H1 (cell line): ENCODE measurements at regions of chr14 and their contacts with region 1.

Region 1: GRCh38 chr14:24093901-24094761 is at the start of gene PCK2:
- DNase-seq: peak; percentile 93 to 95
- H3K4me3 ChIP-seq: peak within 1 kb of the TSS; percentile 60 to 96 (median 84)
- H3K27ac ChIP-seq: peak within 1 kb of the TSS; percentile 89
- H3K4me1 ChIP-seq: peaks cover 5 to 13% (median 9%) of the 10 kb centered on the region in 4 experiments
- H3K27me3 ChIP-seq: no peaks in the 10 kb centered on the region
- CTCF ChIP-seq: no peak
- EP300 ChIP-seq: peak in 1 of 2 experiments; percentile 80; a peak in 1 of 3 replicates
- POLR2A ChIP-seq: peak; percentile 87 to 97
- RAD21 ChIP-seq: no peak
- total RNA-seq, gene PCK2: 79.3 and 81.9 TPM in 2 replicates

Region 2: GRCh38 chr14:23922545-23922944 is 171.6 kb before region 1 on chr14:
- CTCF ChIA-PET with region 1: no interaction called
- POLR2A ChIA-PET with region 1: no interaction called
- DNase-seq: no peak
- H3K4me3 ChIP-seq: no peak overlapping the region
- H3K27ac ChIP-seq: no peak overlapping the region
- H3K4me1 ChIP-seq: no peaks in the 10 kb centered on the region
- H3K27me3 ChIP-seq: no peaks in the 10 kb centered on the region
- CTCF ChIP-seq: no peak
- EP300 ChIP-seq: no peak
- POLR2A ChIP-seq: no peak
- RAD21 ChIP-seq: no peak

Region 3: DNA sequence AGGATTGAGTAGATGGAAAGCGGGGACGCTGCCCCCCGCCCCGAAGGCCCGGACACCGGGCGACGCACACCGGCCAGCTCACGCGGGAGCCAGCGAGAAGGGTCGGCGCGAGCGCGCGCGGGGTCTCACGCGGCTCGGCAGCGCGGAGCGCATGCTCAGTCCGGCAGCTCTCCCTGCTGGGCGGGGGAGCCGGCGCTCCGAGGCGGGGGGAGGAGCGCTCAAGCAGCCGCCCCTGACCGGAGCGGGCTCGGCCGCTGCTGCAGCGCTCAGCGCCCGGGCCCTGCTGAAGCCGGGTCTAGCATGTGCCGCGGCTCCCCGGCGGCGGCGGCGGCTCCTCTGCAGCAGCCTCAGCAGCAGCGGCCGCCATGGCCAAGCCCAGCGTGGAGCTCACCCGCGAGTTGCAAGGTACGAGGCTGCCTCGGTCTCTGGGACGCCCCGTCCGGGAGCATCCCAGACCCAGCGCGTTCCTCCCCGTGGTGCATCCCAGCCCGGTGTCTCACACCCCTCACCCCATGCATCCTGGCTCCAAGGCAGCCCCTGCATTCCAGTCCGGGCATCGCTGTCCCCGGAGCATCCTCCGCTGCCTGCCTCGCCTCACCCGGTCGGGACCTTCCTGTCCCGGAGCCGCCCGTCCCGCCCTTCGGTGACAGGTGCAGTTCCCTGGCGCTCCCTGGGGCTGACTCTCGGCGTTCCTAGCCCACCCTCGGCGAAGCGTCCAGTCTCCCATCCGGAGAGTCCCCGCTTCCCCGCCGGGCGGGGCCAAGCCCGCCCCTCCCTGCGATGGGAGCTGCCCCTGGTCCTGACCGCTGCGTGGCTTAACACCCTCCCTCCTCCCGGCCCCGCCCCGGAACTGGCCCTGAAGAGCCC is 42.1 kb before region 1 on chr14 and contains the start of gene CARMIL3:
- CTCF ChIA-PET with region 1: interaction called, 234 read pairs
- POLR2A ChIA-PET with region 1: interaction called, 97 read pairs
- DNase-seq: peak in 1 of 2 experiments; percentile 89
- H3K4me3 ChIP-seq: peak within 1 kb of the TSS; percentile 56 to 82 (median 80)
- H3K27ac ChIP-seq: no peak within 1 kb of the TSS
- H3K4me1 ChIP-seq: peaks cover 0 to 10% (median 5%) of the 10 kb centered on the region in 4 experiments; a peak in 5 of 7 replicates
- H3K27me3 ChIP-seq: no peaks in the 10 kb centered on the region; a peak in 1 of 7 replicates
- CTCF ChIP-seq: no peak
- EP300 ChIP-seq: peak in 1 of 2 experiments; percentile 25; a peak in 1 of 3 replicates
- POLR2A ChIP-seq: no peak; a peak in 2 of 3 replicates
- RAD21 ChIP-seq: no peak
- total RNA-seq, gene CARMIL3: 8.5 and 9.0 TPM in 2 replicates

Region 4: GRCh38 chr14:24080888-24081738 is 13.0 kb before region 1 on chr14:
- CTCF ChIA-PET with region 1: interaction called, 316 read pairs
- POLR2A ChIA-PET with region 1: interaction called, 626 read pairs
- DNase-seq: peak in 1 of 2 experiments; percentile 81
- H3K4me3 ChIP-seq: peak overlapping the region; percentile 54 to 67 (median 66)
- H3K27ac ChIP-seq: no peak overlapping the region
- H3K4me1 ChIP-seq: peaks cover 0 to 18% (median 12%) of the 10 kb centered on the region in 4 experiments; a peak in 6 of 7 replicates
- H3K27me3 ChIP-seq: peaks cover 0 to 10% (median 7%) of the 10 kb centered on the region in 4 experiments; a peak in 5 of 7 replicates
- CTCF ChIP-seq: no peak
- EP300 ChIP-seq: no peak
- POLR2A ChIP-seq: peak in 1 of 2 experiments; percentile 50; a peak in 1 of 3 replicates
- RAD21 ChIP-seq: no peak

Region 5: GRCh38 chr14:24114536-24115450 is 20.7 kb after region 1 on chr14 and contains the starts of genes DCAF11 and NRL:
- CTCF ChIA-PET with region 1: interaction called, 160 read pairs
- POLR2A ChIA-PET with region 1: interaction called, 259 read pairs
- DNase-seq: peak; percentile 96 to 99
- H3K4me3 ChIP-seq: peak within 1 kb of the TSS; percentile 68 to 89 (median 76)
- H3K27ac ChIP-seq: peak within 1 kb of the TSS; percentile 97
- H3K4me1 ChIP-seq: peaks cover 0 to 4% (median 2%) of the 10 kb centered on the region in 4 experiments; a peak in 5 of 7 replicates
- H3K27me3 ChIP-seq: no peaks in the 10 kb centered on the region
- CTCF ChIP-seq: no peak
- EP300 ChIP-seq: no peak
- POLR2A ChIP-seq: peak; percentile 45 to 75
- RAD21 ChIP-seq: no peak
- total RNA-seq, gene DCAF11: 63.6 and 67.2 TPM in 2 replicates
- total RNA-seq, gene NRL: 1.1 TPM in 2 replicates

Region 6: GRCh38 chr14:24135834-24136542 is 41.9 kb after region 1 on chr14 and contains the start of gene PSME1:
- CTCF ChIA-PET with region 1: interaction called, 3 read pairs
- POLR2A ChIA-PET with region 1: interaction called, 18 read pairs
- DNase-seq: peak in 1 of 2 experiments; percentile 94
- H3K4me3 ChIP-seq: peak within 1 kb of the TSS; percentile 79 to 100 (median 84)
- H3K27ac ChIP-seq: peak within 1 kb of the TSS; percentile 14; the same call in 1 of the 2 replicates
- H3K4me1 ChIP-seq: peaks cover 0 to 10% (median 6%) of the 10 kb centered on the region in 4 experiments; a peak in 5 of 7 replicates
- H3K27me3 ChIP-seq: no peaks in the 10 kb centered on the region
- CTCF ChIP-seq: no peak
- EP300 ChIP-seq: no peak
- POLR2A ChIP-seq: peak; percentile 37 to 38; a peak in 1 of 3 replicates
- RAD21 ChIP-seq: no peak
- total RNA-seq, gene PSME1: 85.9 and 91.7 TPM in 2 replicates

Region 7: GRCh38 chr14:24146978-24147760 is 53.0 kb after region 1 on chr14 and contains the start of gene RNF31:
- CTCF ChIA-PET with region 1: interaction called, 6 read pairs
- POLR2A ChIA-PET with region 1: interaction called, 29 read pairs
- DNase-seq: peak; percentile 93 to 96
- H3K4me3 ChIP-seq: peak within 1 kb of the TSS; percentile 92 to 98 (median 96)
- H3K27ac ChIP-seq: peak within 1 kb of the TSS; percentile 45; the same call in 1 of the 2 replicates
- H3K4me1 ChIP-seq: peaks cover 0 to 10% (median 7%) of the 10 kb centered on the region in 4 experiments; a peak in 5 of 7 replicates
- H3K27me3 ChIP-seq: no peaks in the 10 kb centered on the region
- CTCF ChIP-seq: no peak
- EP300 ChIP-seq: no peak
- POLR2A ChIP-seq: peak in 1 of 2 experiments; percentile 55; a peak in 1 of 3 replicates
- RAD21 ChIP-seq: no peak
- total RNA-seq, gene RNF31: 57.8 and 72.0 TPM in 2 replicates

Region 8: DNA sequence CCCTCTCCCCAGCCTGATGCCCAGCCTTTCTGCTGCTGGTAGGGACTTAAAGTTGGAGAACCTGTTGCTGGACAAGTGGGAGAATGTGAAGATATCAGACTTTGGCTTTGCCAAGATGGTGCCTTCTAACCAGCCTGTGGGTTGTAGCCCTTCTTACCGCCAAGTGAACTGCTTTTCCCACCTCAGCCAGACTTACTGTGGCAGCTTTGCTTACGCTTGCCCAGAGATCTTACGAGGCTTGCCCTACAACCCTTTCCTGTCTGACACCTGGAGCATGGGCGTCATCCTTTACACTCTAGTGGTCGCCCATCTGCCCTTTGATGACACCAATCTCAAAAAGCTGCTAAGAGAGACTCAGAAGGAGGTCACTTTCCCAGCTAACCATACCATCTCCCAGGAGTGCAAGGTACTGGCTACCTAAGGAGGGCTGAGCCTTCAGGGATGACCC is 113.0 kb after region 1 on chr14:
- CTCF ChIA-PET with region 1: no interaction called
- POLR2A ChIA-PET with region 1: no interaction called
- DNase-seq: no peak
- H3K4me3 ChIP-seq: no peak overlapping the region
- H3K27ac ChIP-seq: no peak overlapping the region
- H3K4me1 ChIP-seq: peaks cover 0 to 7% (median 4%) of the 10 kb centered on the region in 4 experiments; a peak in 3 of 7 replicates
- H3K27me3 ChIP-seq: no peaks in the 10 kb centered on the region
- CTCF ChIP-seq: no peak
- EP300 ChIP-seq: no peak
- POLR2A ChIP-seq: no peak
- RAD21 ChIP-seq: no peak

Region 9: DNA sequence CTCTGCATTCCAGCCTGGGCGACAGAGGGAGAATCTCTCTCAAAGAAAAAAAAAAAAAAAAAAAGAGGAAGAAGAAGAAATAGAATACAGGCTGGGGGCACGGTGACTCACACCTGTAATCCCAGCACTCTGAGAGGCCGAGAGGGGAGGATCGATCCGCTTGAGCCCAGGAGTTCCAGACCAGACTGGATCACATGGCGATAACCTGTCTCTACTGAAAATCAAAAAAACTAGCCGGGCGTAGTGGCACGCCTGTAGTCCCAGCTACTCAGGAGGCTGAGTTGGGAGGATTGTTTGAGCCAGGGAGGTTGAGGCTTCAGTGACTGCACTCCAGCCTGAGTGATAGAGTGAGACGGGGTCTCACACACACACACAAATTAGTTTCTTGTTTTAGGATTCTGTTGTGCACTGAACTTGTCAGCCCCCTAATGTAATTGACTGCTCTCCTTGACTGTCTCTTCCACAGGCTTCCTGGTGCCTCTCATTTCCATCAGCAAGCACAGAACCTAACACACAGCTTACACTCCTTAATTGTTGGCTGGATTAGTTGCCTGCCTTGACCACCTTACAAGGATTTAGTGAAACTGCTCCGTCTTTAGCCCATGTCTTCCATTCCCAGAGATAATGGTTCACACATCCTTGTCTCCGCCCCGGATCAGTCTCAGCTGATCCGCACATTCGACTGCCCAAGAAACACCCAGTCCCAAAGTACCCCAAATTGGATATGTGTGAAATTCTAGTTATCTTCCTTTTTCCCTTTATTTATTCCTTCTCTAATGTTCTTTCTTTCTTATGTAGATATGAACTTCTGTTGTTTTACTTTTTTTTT is 149.4 kb after region 1 on chr14:
- CTCF ChIA-PET with region 1: no interaction called
- POLR2A ChIA-PET with region 1: no interaction called
- DNase-seq: no peak
- H3K4me3 ChIP-seq: peak overlapping the region; percentile 80 to 97 (median 92); a peak in 6 of 8 replicates
- H3K27ac ChIP-seq: no peak overlapping the region
- H3K4me1 ChIP-seq: peaks cover 0 to 5% (median 2%) of the 10 kb centered on the region in 4 experiments; a peak in 4 of 7 replicates
- H3K27me3 ChIP-seq: no peaks in the 10 kb centered on the region
- CTCF ChIP-seq: no peak
- EP300 ChIP-seq: no peak
- POLR2A ChIP-seq: no peak
- RAD21 ChIP-seq: no peak